OCI-LY7 (cell line): ENCODE measurements at regions of chr20 and their contacts with region 1.

Region 1: DNA sequence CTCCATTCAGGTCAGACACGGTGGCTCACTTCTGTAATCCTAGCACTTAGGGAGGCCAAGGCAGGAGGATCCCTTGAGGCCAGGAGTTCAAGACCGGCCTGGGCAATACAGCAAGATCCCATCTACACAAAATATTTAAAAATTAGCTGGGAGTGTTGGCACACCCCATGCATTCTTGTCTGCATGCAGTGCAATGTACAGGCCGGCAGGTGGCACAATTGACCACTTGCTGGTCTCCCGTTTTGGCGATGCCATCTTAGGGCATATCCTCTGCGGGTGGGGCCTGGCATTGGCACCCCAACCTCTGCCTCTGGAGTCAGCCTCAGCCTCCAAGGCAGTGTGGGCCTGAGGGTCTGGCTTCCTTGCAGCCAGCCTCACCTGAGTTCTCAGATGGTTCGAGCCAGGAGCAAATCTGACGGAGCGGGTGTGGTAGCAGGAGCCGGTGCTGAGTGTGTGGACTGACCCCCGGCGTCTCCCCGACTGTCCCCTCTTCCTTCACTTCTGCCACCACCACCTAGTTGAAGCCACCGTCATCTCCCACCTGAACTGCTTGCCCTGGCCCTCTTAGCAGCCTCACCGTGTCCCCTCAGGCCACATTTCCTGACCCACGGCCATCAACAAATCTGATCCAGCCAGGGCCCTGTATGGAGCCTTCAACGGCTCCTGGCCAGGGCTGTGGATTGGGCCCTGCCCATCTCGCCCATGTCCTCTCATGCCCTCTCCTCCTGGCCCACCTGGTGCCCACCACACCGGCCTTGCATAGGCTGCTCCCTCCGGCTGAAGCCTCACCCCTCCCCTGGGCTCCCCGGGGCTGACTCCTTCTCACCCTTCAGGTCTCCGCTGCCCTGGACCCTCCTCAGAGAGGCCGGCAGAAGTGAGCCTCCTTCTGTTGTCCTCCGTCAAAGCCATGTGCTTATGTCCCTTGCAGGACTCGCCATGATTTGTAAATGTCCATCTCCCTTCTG is 44.0 kb downstream of the EFCAB8 start:
- DNase-seq: peak; percentile 61
- H3K4me3 ChIP-seq: no peak overlapping the region
- H3K27ac ChIP-seq: no peak overlapping the region
- H3K4me1 ChIP-seq: no peaks in the 10 kb centered on the region
- CTCF ChIP-seq: peak; percentile 92

Region 2: GRCh38 chr20:33005132-33005566 is 102.4 kb after region 1 on chr20:
- CTCF ChIA-PET with region 1: no interaction called
- POLR2A ChIA-PET with region 1: no interaction called
- intact Hi-C with region 1: loop called (anchors 1 kb)
- DNase-seq: peak; percentile 41
- H3K4me3 ChIP-seq: no peak overlapping the region
- H3K27ac ChIP-seq: no peak overlapping the region
- H3K4me1 ChIP-seq: no peaks in the 10 kb centered on the region
- CTCF ChIP-seq: peak; percentile 81

Region 3: DNA sequence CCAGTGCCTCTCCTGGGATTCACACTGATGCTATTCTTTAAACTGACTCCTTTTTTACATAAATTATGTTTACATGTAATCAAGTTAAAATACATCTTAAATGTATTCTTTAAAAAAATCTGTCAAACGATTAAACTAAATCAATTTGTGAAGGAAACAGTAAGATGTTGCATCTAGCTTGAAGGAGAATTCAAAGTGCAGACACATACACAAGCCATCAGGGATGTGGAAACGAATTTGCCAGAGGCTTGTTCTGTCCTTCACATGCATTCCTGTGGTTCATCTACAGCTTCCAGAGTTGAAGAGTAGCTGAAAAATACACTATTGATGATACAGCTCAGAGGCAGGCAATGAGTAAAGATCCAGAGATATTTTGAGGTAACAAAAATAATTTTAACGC is 143.7 kb after region 1 on chr20:
- CTCF ChIA-PET with region 1: no interaction called
- POLR2A ChIA-PET with region 1: no interaction called
- intact Hi-C with region 1: no loop called
- DNase-seq: no peak
- H3K4me3 ChIP-seq: no peak overlapping the region
- H3K27ac ChIP-seq: no peak overlapping the region
- H3K4me1 ChIP-seq: no peaks in the 10 kb centered on the region
- CTCF ChIP-seq: no peak

Region 4: DNA sequence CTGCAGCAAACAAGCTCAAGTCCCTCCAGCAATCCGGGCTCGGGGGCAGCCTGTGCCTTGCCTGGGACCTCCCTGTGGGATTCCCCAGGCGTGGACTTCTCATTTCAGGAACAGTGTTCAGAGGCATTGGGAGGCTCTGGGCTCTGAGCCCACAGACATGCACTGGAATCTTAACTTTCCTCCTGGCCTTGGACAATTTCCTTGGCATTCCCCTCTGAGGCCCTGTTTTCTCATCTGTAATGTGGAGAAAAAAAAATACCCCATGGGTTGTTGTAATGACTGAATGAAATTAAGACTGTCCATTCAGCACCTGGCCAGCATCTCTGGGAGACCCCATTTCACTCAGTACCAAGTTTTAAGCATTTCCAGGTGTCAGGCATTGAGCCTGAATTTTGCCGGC is 194.3 kb after region 1 on chr20:
- CTCF ChIA-PET with region 1: interaction called, 3 read pairs
- POLR2A ChIA-PET with region 1: no interaction called
- intact Hi-C with region 1: loop called (anchors 1 kb)
- DNase-seq: no peak
- H3K4me3 ChIP-seq: no peak overlapping the region
- H3K27ac ChIP-seq: no peak overlapping the region
- H3K4me1 ChIP-seq: no peaks in the 10 kb centered on the region
- CTCF ChIP-seq: no peak

Region 5: DNA sequence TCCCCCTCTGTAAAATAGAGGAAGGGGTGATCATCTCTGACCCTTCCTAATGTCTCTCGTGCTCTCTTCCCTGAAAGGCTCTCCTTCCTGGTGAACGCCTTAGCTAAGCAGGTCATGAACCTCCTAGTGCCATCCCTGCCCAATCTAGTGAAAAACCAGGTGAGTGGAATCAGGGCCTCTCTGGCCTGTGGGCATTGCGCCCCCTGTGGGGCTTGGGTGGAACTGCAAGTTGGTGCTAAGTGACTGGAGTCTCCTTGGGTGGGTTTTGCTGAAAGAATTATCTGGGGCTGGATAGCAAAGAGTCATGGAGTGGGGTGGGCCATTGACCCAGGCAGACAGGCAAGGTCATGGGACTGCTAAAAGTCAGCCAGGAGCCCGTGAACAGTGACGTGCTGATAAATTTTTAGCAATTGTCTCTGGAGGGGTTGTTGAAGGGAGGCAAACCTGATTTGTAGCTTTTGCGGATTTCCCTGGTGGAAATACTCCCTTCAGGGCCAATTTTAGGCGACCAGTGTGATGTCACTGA is 389.2 kb after region 1 on chr20:
- CTCF ChIA-PET with region 1: no interaction called
- POLR2A ChIA-PET with region 1: no interaction called
- intact Hi-C with region 1: loop called (anchors 5 kb)
- DNase-seq: peak; percentile 61
- H3K4me3 ChIP-seq: no peak overlapping the region
- H3K27ac ChIP-seq: no peak overlapping the region
- H3K4me1 ChIP-seq: no peaks in the 10 kb centered on the region
- CTCF ChIP-seq: peak; percentile 99